GM12878 (cell line): ENCODE measurements at regions of chr7 and their contacts with region 1.

Region 1: GRCh38 chr7:78924581-78924980 is 528.9 kb downstream of the MAGI2 start:
- DNase-seq: no peak
- ATAC-seq: no peak
- H3K4me3 ChIP-seq: no peak overlapping the region
- H3K27ac ChIP-seq: no peak overlapping the region
- H3K4me1 ChIP-seq: no peaks in the 10 kb centered on the region
- H3K27me3 ChIP-seq: no peaks in the 10 kb centered on the region
- CTCF ChIP-seq: peak in 1 of 3 experiments; percentile 16; a peak in 1 of 6 replicates
- EP300 ChIP-seq: no peak
- POLR2A ChIP-seq: no peak
- RAD21 ChIP-seq: peak; percentile 57

Region 2: DNA sequence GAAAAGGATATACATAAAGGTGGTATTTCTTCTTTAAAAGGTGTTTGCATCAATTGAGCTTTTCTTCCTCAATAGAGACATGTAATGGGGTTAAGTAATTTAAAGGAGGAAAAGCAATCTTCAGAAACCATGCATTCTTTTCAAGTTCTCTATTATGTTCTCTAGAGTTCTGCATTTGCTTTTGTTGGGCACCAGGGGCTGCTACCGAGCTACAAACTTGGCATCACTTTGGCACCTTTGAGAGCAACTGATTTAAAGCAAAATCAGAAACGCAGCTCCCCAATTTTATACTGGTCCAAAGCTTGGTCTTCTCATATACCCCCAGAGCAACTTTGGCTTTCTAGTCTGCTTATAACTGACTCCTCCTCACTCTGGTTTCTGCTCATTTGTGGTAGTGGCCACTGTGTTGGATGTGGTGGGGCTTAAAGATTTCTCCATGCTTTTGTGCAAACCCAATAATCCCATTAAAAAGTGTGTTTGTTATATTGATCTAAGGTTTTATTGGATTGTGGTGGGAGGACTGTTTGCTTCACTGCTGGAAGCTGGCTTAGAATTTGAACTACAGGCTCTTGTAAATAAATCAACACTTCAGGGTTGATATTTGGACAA is 413.9 kb before region 1 on chr7:
- CTCF ChIA-PET with region 1: no interaction called
- POLR2A ChIA-PET with region 1: no interaction called
- RAD21 ChIA-PET with region 1: no interaction called
- SMC1A ChIA-PET with region 1: no interaction called
- in situ Hi-C with region 1: no loop called
- intact Hi-C with region 1: loop called (anchors 10 kb)
- DNase-seq: no peak
- ATAC-seq: peak; percentile 71
- H3K4me3 ChIP-seq: no peak overlapping the region
- H3K27ac ChIP-seq: no peak overlapping the region
- H3K4me1 ChIP-seq: no peaks in the 10 kb centered on the region
- H3K27me3 ChIP-seq: no peaks in the 10 kb centered on the region
- CTCF ChIP-seq: peak; percentile 58 to 69 (median 68)
- EP300 ChIP-seq: no peak
- POLR2A ChIP-seq: no peak
- RAD21 ChIP-seq: peak; percentile 72

Region 3: DNA sequence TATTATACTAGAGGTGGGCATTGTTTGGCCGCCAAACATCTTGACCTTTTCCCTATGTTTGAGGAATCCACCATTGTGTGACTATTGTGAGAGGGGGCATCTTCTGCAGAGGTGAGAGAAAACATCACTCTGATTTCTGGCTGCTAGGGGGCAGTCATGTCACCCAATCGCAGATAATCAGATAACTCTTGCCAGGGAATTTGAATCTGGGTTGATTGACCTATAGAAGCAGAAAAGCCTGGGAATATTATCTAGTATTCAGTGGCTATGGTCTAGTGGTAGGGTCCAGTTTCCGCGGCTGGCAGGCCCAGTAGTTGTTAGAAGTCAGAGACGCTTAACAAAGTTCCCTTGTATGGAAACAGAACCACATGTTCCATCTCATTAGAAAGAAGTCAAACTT is 317.5 kb before region 1 on chr7:
- CTCF ChIA-PET with region 1: interaction called, 3 read pairs
- POLR2A ChIA-PET with region 1: no interaction called
- RAD21 ChIA-PET with region 1: no interaction called
- SMC1A ChIA-PET with region 1: no interaction called
- in situ Hi-C with region 1: no loop called
- intact Hi-C with region 1: loop called (anchors 10 kb)
- DNase-seq: no peak
- ATAC-seq: 0 out of 3 replicates have a peak, but pooled peaks have one; percentile 41
- H3K4me3 ChIP-seq: no peak overlapping the region
- H3K27ac ChIP-seq: no peak overlapping the region
- H3K4me1 ChIP-seq: no peaks in the 10 kb centered on the region
- H3K27me3 ChIP-seq: no peaks in the 10 kb centered on the region
- CTCF ChIP-seq: peak; percentile 30 to 38 (median 33); a peak in 5 of 6 replicates
- EP300 ChIP-seq: no peak
- POLR2A ChIP-seq: no peak
- RAD21 ChIP-seq: peak; percentile 39; the same call in 1 of the 2 replicates

Region 4: DNA sequence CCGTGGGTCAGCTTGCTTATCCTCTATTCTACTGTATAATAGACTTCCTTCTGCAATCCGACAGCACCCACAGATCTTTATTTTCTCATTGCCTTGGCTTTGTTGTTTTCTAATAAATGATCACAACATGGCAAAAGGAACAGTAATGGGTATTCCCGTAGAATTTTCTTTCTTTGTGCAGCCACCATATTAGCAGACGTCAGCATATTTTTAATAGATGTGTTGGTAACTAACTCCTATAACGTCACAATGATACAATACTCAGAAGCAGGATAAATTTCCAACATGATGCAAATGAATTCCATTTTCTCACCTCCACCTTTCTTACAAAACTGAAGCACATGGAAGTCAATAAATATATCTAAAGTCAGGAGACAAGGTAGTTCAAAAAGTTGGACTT is 88.7 kb before region 1 on chr7:
- CTCF ChIA-PET with region 1: no interaction called
- POLR2A ChIA-PET with region 1: no interaction called
- RAD21 ChIA-PET with region 1: no interaction called
- SMC1A ChIA-PET with region 1: no interaction called
- in situ Hi-C with region 1: no loop called
- intact Hi-C with region 1: no loop called
- DNase-seq: no peak
- ATAC-seq: no peak
- H3K4me3 ChIP-seq: no peak overlapping the region
- H3K27ac ChIP-seq: no peak overlapping the region
- H3K4me1 ChIP-seq: no peaks in the 10 kb centered on the region
- H3K27me3 ChIP-seq: no peaks in the 10 kb centered on the region
- CTCF ChIP-seq: no peak
- EP300 ChIP-seq: no peak
- POLR2A ChIP-seq: no peak
- RAD21 ChIP-seq: no peak